ENCODE measurements at regions of chr11 and their contacts with region 1.

Region 1: GRCh38 chr11:94897330-94897768 is 76.0 kb downstream of the CWC15 start:
- DNase-seq: peak; percentile 62
- H3K4me3 Mint-ChIP-seq: no peak overlapping the region
- H3K27ac Mint-ChIP-seq: no peak overlapping the region
- H3K4me1 Mint-ChIP-seq: no peaks in the 10 kb centered on the region
- H3K27me3 Mint-ChIP-seq: no peaks in the 10 kb centered on the region
- CTCF ChIP-seq: peak; percentile 83

Region 2: DNA sequence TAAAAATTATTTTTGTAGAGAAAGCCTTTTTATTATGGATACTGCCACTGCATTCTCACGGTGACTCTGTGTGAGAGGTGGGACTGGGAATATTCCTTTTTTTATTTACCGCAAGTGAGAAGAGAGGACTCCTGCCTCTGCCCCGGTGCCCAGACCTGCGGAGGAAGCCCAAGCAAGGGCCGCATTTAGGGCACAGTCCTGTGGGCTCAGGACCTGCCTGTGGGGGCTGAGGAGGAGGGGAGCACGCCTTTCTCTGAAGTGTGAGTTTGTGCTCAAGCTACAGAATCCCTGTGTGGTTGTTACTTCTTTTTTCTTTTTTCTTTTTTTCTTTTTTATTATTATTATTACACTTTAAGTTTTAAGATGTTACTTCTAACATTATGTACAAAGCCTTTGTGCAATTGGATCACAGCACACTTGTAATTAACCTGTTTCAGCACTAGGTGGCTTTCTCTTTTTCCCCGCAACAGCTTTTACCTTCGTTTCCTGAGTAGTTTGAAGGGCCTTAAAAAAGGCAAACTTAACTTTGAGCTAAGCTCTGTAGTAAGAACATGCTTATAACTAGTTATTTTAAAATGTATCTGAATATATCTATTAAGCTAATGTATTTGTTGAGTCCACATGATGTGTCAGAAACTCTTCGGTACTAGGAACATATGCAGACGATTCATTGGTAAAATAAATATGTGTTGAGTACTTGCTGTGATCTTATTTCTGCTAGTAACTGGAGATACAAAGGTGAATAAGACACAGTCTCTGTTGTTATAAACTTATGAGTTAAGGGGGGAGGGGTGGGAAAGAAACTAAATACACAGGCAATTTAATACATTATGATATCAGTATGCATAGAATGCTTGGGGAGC is 110.9 kb before region 1 on chr11:
- CTCF ChIA-PET with region 1: interaction called, 14 read pairs
- POLR2A ChIA-PET with region 1: no interaction called
- intact Hi-C with region 1: loop called (anchors 1 kb)
- DNase-seq: peak; percentile 56
- H3K4me3 Mint-ChIP-seq: no peak overlapping the region
- H3K27ac Mint-ChIP-seq: no peak overlapping the region
- H3K4me1 Mint-ChIP-seq: peaks cover 53% of the 10 kb centered on the region
- H3K27me3 Mint-ChIP-seq: no peaks in the 10 kb centered on the region
- CTCF ChIP-seq: peak; percentile 47

Region 3: GRCh38 chr11:94876645-94877442 is 20.5 kb before region 1 on chr11:
- CTCF ChIA-PET with region 1: interaction called, 7 read pairs
- POLR2A ChIA-PET with region 1: interaction called, 3 read pairs
- intact Hi-C with region 1: loop called (anchors 2 kb)
- DNase-seq: peak; percentile 85
- H3K4me3 Mint-ChIP-seq: peak overlapping the region; percentile 1
- H3K27ac Mint-ChIP-seq: peak overlapping the region; percentile 87
- H3K4me1 Mint-ChIP-seq: peaks cover 24% of the 10 kb centered on the region
- H3K27me3 Mint-ChIP-seq: no peaks in the 10 kb centered on the region
- CTCF ChIP-seq: peak; percentile 34

Region 4: GRCh38 chr11:94885133-94885532 is 12.2 kb before region 1 on chr11:
- CTCF ChIA-PET with region 1: interaction called, 21 read pairs
- POLR2A ChIA-PET with region 1: interaction called, 3 read pairs
- intact Hi-C with region 1: no loop called
- DNase-seq: peak; percentile 30
- H3K4me3 Mint-ChIP-seq: no peak overlapping the region
- H3K27ac Mint-ChIP-seq: no peak overlapping the region
- H3K4me1 Mint-ChIP-seq: peaks cover 3% of the 10 kb centered on the region
- H3K27me3 Mint-ChIP-seq: no peaks in the 10 kb centered on the region
- CTCF ChIP-seq: no peak

Region 5: DNA sequence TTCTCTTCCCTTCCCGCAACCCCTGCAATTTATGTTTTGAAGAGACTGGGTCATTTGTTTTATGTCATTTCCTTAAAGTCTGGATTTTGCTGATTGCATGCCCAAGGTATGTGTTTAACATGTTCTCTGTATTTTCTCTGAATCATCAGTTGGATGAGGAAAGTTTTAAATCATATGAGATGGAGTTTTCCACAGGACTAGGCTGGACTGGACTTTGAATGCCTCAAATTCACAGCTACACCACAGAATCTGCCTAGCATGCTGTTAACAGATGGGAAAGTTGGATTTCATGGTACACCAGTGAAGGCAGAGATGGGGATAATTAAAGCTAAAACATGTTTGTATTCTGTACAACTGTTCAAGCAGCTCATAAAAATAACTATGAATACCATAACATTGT is 13.4 kb after region 1 on chr11:
- CTCF ChIA-PET with region 1: interaction called, 13 read pairs
- POLR2A ChIA-PET with region 1: no interaction called
- intact Hi-C with region 1: no loop called
- DNase-seq: no peak
- H3K4me3 Mint-ChIP-seq: no peak overlapping the region
- H3K27ac Mint-ChIP-seq: no peak overlapping the region
- H3K4me1 Mint-ChIP-seq: no peaks in the 10 kb centered on the region
- H3K27me3 Mint-ChIP-seq: no peaks in the 10 kb centered on the region
- CTCF ChIP-seq: no peak